Upper lobe of right lung (tissue), 1 donor: ENCODE measurements at regions of chr3 and their contacts with region 1.

Region 1: DNA sequence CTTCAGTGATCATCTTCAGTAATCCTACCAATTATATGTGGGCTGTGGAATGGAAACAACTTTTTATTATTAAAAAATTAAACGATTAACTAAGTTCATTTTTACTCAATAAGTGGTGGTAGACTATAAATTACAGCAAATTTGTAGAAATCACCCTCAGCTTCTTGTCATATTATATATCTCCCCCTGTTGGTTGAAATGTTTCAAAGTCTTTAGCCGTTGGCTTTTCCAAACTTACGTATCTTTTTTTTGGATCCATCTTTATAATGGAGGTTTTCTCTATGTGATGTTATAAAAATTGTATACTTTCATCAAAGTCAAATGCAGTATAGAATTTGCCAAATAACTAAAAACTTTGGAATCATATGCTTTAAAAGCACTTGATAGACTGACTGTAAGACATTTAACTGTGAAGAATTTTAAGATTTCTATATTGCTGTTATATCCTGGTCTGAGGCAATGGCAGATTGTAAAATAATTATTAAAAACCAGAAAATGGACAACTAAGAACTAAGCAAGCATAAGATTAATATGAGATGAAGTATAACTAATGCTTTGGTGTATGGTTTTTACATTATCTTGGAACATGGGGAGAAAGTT is 44.7 kb downstream of the ATP11B start:
- DNase-seq: no peak
- ATAC-seq: no peak
- H3K4me3 ChIP-seq: no peak overlapping the region
- H3K27ac ChIP-seq: no peak overlapping the region
- H3K4me1 ChIP-seq: no peaks in the 10 kb centered on the region
- H3K27me3 ChIP-seq: no peaks in the 10 kb centered on the region
- CTCF ChIP-seq: peak; percentile 54

Region 2: DNA sequence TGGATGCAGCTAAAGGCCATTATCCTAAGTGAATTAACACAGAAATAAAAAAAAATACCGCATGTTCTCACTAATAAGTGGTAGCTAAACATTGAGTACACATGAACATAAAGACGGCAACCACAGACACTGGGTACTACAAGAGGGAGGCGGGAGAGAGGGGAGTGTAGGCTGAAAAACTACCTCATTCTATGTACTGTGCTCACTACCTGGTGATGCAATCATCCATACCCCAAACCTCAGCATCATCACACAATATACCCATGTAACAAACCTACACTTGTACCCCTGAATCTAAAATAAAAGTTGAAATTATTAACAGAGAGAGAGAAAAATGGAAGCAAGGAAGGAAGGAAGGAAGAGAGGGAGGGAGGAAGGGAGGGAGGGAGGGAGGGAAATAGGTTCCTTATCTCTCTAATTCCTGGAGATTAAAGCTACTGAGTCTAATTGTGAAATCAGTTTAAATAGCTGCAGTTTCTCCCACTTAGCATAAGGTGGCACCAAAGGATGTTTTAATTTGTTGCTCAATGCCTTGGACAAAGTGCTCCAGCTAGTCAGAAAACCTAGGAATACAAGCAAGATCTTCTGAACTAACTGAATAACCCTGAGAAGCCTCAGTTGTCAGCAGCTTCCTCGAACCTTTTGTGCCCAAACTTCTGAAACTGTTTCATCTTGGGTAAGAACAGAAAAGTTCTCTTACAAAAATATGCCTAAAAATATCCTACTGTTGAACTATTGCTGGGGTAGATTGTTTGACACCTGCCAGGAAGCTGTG is 124.0 kb before region 1 on chr3:
- intact Hi-C with region 1: loop called (anchors 5 kb)
- DNase-seq: no peak
- ATAC-seq: peak; percentile 85
- H3K4me3 ChIP-seq: no peak overlapping the region
- H3K27ac ChIP-seq: no peak overlapping the region
- H3K4me1 ChIP-seq: no peaks in the 10 kb centered on the region
- H3K27me3 ChIP-seq: no peaks in the 10 kb centered on the region
- CTCF ChIP-seq: peak; percentile 63

Region 3: DNA sequence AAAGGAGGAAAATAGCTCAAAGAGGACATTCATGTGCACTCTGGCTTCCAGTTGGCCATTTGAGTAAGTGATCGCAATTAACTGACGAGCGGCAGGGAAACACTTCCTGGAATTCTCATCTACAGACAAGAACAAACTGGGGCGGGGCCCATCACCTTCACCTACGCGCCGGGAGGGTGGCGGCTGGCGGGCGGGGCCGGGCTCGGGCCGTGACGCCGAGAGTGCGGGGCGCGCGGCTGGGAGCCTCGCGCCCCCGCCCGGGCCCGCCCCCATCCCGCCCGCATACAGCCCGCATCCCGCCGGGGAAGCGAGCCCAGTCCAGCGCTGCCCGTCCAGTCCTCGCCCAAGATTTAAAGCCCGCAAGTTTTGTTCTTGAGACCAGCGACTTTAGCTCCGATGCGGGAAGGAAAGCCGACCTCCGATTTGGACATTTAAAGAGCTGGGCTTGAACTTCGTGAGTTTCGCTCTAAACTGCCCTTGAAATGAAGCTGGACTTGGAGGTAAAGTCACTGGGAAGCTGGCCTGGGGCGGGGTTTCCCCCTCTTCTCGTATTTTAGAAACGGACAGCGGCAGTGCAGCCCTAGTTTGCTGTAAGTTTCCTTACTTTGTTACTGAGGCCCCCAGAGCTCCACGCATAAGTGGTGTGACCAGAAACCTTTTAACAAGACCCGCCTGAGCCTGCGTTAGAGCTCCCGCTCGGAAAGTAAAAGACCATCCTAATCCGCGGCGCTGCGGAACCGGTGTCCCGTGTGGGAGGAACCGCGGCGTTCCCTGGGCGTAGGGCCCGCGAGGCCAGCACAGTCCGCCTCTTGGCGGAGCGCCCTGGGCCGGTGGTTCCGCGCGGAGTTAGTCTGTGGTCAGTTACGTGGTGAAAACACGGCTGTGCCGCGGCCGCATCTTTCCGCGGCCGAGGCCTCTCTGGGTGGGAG is 415.3 kb after region 1 on chr3 and contains the start of gene B3GNT5:
- intact Hi-C with region 1: no loop called
- DNase-seq: peak; percentile 92
- ATAC-seq: peak; percentile 85
- H3K4me3 ChIP-seq: peak within 1 kb of the TSS; percentile 81
- H3K27ac ChIP-seq: peak within 1 kb of the TSS; percentile 90
- H3K4me1 ChIP-seq: peaks cover 6% of the 10 kb centered on the region
- H3K27me3 ChIP-seq: no peaks in the 10 kb centered on the region
- CTCF ChIP-seq: no peak
- total RNA-seq, gene B3GNT5: 31.0 TPM